Activated CD8-positive, alpha-beta T cell treated with anti-CD3 and anti-CD28 coated beads, Interleukin-2, amount 10 ng/mL, durations not matched to agents 7 days and 5 days (primary cell): ENCODE measurements at regions of chr4 and their contacts with region 1.

Region 1: GRCh38 chr4:158809611-158810486 is 41.0 kb downstream of the FNIP2 start:
- DNase-seq: peak; percentile 43
- ATAC-seq: peak; percentile 66
- H3K4me3 Mint-ChIP-seq: peak overlapping the region; percentile 34
- H3K27ac Mint-ChIP-seq: peak overlapping the region; percentile 7
- H3K4me1 Mint-ChIP-seq: peaks cover 36% of the 10 kb centered on the region
- H3K27me3 Mint-ChIP-seq: no peaks in the 10 kb centered on the region

Region 2: GRCh38 chr4:158826057-158826456 is 16.2 kb after region 1 on chr4:
- CTCF ChIA-PET with region 1: interaction called, 10 read pairs
- POLR2A ChIA-PET with region 1: interaction called, 6 read pairs
- DNase-seq: no peak
- ATAC-seq: no peak
- H3K4me3 Mint-ChIP-seq: no peak overlapping the region
- H3K27ac Mint-ChIP-seq: no peak overlapping the region
- H3K4me1 Mint-ChIP-seq: peaks cover 26% of the 10 kb centered on the region
- H3K27me3 Mint-ChIP-seq: no peaks in the 10 kb centered on the region

Region 3: DNA sequence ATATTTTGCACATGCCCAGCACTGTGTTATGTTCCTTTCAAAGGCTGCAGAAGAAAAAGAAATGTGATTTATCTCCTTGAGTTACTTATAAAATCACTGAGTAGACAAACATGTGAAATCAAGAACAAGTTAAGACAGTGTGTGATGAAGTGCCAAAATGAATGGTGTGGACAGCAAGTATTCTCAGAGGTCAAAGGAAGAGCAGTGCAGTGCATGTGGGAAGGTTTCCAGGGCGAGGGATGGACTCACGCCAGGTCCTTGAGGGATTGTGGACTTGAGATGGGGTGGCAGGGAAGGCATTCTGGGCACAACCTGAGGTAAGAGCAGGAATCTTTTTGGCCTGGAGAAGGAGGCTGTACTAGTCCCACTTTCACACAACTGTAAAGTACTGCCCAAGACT is 74.4 kb after region 1 on chr4:
- CTCF ChIA-PET with region 1: no interaction called
- POLR2A ChIA-PET with region 1: no interaction called
- DNase-seq: no peak
- ATAC-seq: no peak
- H3K4me3 Mint-ChIP-seq: no peak overlapping the region
- H3K27ac Mint-ChIP-seq: no peak overlapping the region
- H3K4me1 Mint-ChIP-seq: no peaks in the 10 kb centered on the region
- H3K27me3 Mint-ChIP-seq: no peaks in the 10 kb centered on the region